Activated CD4-positive, alpha-beta memory T cell treated with anti-CD3 and anti-CD28 coated beads for 36 hours (primary cell): ENCODE measurements at regions of chr6 and their contacts with region 1.

Region 1: DNA sequence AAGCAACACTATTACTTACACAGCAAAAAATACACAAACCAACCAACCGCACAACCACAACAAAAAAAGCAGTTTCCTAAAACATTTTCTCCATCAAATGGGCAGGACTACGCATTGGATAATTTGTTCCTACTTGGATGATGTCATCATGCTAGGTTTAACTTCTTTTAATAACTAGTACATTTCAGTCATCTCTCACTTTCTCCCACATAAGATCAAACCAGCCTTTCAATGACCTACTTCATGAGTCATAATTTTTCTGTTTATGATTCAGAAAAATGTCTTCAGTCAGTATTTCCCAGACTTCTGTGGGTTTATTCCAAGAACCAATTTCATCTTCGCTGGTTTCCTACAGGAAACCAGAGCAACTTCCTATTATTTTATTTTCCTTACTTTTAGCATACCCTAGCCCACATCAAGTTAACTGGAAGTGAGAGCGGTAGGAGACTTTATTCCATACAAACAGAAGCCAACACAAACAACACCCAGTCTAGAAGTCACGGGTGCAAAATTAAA is 134.2 kb downstream of the GMDS start:
- DNase-seq: no peak
- H3K4me3 Mint-ChIP-seq: peak overlapping the region; percentile 61
- H3K27ac Mint-ChIP-seq: peak overlapping the region; percentile 85
- H3K4me1 Mint-ChIP-seq: peaks cover 29% of the 10 kb centered on the region
- H3K27me3 Mint-ChIP-seq: peaks cover 2% of the 10 kb centered on the region

Region 2: GRCh38 chr6:2127484-2127911 is 16.3 kb after region 1 on chr6:
- CTCF ChIA-PET with region 1: no interaction called
- POLR2A ChIA-PET with region 1: interaction called, 5 read pairs
- intact Hi-C with region 1: loop called (anchors 1 kb)
- DNase-seq: peak; percentile 73
- H3K4me3 Mint-ChIP-seq: no peak overlapping the region
- H3K27ac Mint-ChIP-seq: peak overlapping the region; percentile 33
- H3K4me1 Mint-ChIP-seq: peaks cover 33% of the 10 kb centered on the region
- H3K27me3 Mint-ChIP-seq: no peaks in the 10 kb centered on the region

Region 3: DNA sequence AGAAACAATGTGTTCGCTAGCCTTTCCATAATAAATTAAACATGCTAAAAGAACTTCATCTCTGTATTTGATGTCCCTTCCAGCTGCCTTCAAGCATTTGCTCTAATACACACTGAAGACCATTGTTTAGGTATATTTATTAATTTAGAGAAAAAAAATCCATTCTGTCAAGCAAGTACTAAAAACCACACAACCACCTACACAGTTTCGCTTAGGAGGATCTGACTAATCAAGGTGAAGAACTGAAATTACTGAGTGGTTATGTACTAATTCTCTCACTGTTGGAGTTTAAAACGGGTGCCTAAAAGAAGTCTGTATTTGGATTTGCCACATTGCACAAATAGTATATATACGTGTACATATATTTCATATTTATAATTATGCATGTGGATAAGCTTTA is 75.3 kb after region 1 on chr6:
- CTCF ChIA-PET with region 1: no interaction called
- POLR2A ChIA-PET with region 1: interaction called, 3 read pairs
- intact Hi-C with region 1: loop called (anchors 1 kb)
- DNase-seq: no peak
- H3K4me3 Mint-ChIP-seq: no peak overlapping the region
- H3K27ac Mint-ChIP-seq: no peak overlapping the region
- H3K4me1 Mint-ChIP-seq: peaks cover 16% of the 10 kb centered on the region
- H3K27me3 Mint-ChIP-seq: peaks cover 15% of the 10 kb centered on the region

Region 4: GRCh38 chr6:2353412-2354137 is 242.4 kb after region 1 on chr6:
- CTCF ChIA-PET with region 1: no interaction called
- POLR2A ChIA-PET with region 1: no interaction called
- intact Hi-C with region 1: loop called (anchors 5 kb)
- DNase-seq: peak; percentile 70
- H3K4me3 Mint-ChIP-seq: no peak overlapping the region
- H3K27ac Mint-ChIP-seq: no peak overlapping the region
- H3K4me1 Mint-ChIP-seq: no peaks in the 10 kb centered on the region
- H3K27me3 Mint-ChIP-seq: no peaks in the 10 kb centered on the region

Region 5: GRCh38 chr6:2563635-2564034 is 452.4 kb after region 1 on chr6:
- CTCF ChIA-PET with region 1: no interaction called
- POLR2A ChIA-PET with region 1: no interaction called
- intact Hi-C with region 1: loop called (anchors 1 kb)
- DNase-seq: peak; percentile 48
- H3K4me3 Mint-ChIP-seq: no peak overlapping the region
- H3K27ac Mint-ChIP-seq: no peak overlapping the region
- H3K4me1 Mint-ChIP-seq: peaks cover 11% of the 10 kb centered on the region
- H3K27me3 Mint-ChIP-seq: peaks cover 61% of the 10 kb centered on the region